ENCODE measurements at regions of chr5 and their contacts with region 1.

Region 1: DNA sequence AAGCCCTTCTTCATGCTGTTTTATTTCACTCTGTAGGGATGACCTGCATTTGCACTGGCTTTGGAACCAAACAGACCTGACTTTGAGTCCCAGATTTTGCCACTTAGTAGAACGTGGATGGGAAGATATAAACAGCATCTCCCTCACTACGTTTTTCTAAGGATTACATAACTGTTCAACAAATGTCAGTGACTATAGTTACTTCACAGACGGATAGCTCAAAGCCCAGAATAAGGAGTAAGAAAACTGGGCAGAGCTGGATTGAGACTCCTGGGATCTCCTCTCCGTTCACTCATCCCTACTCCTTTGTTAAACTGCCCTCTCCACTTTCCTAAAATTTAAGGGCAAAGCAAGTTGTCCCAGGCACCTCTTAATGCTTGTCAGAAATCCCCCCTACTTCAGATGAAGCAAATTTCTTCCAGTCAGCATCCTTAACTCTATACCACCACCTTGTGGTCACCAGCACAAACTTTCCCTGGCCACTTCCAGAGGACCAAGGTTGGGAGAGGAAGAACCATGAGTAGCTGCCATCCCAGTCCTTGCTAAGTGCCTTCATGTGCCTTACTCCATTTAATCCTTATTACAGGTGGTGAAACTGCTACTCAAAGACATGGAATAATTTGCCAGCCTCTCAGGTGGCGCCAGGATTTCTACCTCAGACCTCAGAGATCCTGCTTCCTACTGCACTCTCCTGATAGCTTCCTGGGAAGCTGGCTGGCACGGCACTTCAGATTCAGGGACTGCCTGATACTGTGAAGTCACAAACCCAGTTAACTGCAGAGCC is 38.4 kb downstream of the EGR1 start:
- DNase-seq: peak in 6 of 14 experiments; percentile 20 to 78 (median 51)
- ATAC-seq: peak; percentile 79
- H3K4me3 ChIP-seq: no peak overlapping the region
- H3K4me3 Mint-ChIP-seq: no peak overlapping the region
- H3K27ac ChIP-seq: no peak overlapping the region
- H3K27ac Mint-ChIP-seq: no peak overlapping the region
- H3K4me1 ChIP-seq: no peaks in the 10 kb centered on the region
- H3K4me1 Mint-ChIP-seq: no peaks in the 10 kb centered on the region
- H3K27me3 ChIP-seq: no peaks in the 10 kb centered on the region
- H3K27me3 Mint-ChIP-seq: no peaks in the 10 kb centered on the region
- CTCF ChIP-seq: peak; percentile 74

Region 2: DNA sequence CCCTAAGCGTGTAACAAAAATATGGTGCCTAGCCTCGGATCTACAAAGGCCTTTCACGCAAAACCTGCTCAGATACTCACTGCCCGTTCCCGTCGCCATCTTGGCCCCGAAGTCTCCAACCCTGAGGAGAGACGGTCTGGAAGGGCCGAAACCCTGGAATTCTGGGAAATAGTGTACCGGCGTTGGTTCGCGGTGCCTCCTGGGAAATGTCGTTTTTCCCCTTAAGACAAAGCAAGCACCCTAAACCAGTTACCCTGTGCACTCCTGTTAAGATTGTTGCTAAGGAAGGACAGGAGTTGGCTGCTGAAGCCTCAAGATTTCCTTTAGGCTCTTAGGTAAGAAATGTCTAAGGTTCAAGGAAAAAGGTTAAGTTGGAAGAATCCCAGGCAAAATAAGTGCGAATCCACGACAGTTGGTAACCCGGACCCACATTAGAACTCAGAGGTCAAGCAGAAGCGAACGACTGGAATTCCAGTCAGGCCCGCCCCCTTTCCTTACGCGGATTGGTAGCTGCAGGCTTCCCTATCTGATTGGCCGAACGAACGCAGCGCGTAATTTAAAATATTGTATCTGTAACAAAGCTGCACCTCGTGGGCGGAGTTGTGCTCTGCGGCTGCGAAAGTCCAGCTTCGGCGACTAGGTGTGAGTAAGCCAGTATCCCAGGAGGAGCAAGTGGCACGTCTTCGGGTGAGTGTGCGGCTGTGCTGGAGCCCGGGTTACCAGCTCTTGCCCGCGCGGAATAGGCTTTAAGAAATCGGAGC is 325.0 kb before region 1 on chr5 and contains the starts of genes BRD8 and KIF20A:
- CTCF ChIA-PET with region 1: no interaction called
- POLR2A ChIA-PET with region 1: no interaction called
- intact Hi-C with region 1: loop called in 1 of 2 experiments (anchors 5 kb)
- DNase-seq: peak; percentile 77 to 94 (median 85)
- ATAC-seq: peak; percentile 86
- H3K4me3 ChIP-seq: peak within 1 kb of the TSS; percentile 94
- H3K4me3 Mint-ChIP-seq: no peak within 1 kb of the TSS
- H3K27ac ChIP-seq: peak within 1 kb of the TSS; percentile 55 to 76
- H3K27ac Mint-ChIP-seq: no peak within 1 kb of the TSS
- H3K4me1 ChIP-seq: peaks cover 27% of the 10 kb centered on the region
- H3K4me1 Mint-ChIP-seq: peaks cover 11% of the 10 kb centered on the region
- H3K27me3 ChIP-seq: no peaks in the 10 kb centered on the region
- H3K27me3 Mint-ChIP-seq: no peaks in the 10 kb centered on the region
- CTCF ChIP-seq: no peak
- total RNA-seq, gene BRD8: 6.9 to 9.6 TPM
- total RNA-seq, gene KIF20A: not detected

Region 3: DNA sequence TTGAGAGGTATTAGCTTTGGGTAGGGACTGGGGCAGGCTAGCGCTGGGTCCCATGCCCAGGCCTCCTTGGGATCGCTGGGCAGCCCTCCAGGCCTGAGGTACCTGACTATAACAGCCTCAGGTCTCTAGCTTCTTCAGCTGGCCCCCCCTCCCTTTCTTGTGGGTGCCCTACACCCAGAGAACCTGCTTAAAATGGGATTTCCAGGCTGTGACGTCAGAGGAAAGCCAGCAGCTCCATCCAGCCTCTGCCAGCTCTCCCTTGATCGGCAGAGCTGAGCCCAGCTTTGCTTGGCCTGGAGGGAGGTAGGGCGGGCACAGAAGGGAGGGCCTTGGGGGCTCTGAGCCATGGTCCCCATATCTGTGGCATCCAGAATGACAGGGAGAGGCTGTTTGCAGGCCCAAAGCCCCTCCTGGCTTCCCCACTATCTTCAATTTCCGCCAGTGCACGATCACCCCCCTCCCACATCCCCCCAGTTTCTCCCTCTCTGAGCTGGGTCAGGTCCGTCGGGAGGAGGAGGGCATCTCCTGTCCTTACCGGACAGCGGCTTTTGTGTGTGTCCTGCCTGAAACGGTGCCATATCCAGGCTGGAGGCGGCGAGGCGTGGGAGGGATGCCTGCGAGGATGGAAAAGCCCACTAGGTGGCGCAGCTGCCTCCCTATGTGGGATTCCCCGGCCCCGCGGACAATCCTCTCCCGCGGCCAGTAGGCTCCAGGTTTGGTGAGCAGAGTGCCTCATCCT is 54.0 kb before region 1 on chr5:
- CTCF ChIA-PET with region 1: interaction called, 46 read pairs
- POLR2A ChIA-PET with region 1: interaction called, 3 read pairs
- intact Hi-C with region 1: loop called (anchors 1 kb)
- DNase-seq: peak; percentile 56 to 87 (median 67)
- ATAC-seq: peak; percentile 87
- H3K4me3 ChIP-seq: no peak overlapping the region
- H3K4me3 Mint-ChIP-seq: no peak overlapping the region
- H3K27ac ChIP-seq: no peak overlapping the region
- H3K27ac Mint-ChIP-seq: peak overlapping the region; percentile 54
- H3K4me1 ChIP-seq: peaks cover 10% of the 10 kb centered on the region
- H3K4me1 Mint-ChIP-seq: peaks cover 6% of the 10 kb centered on the region
- H3K27me3 ChIP-seq: no peaks in the 10 kb centered on the region
- H3K27me3 Mint-ChIP-seq: no peaks in the 10 kb centered on the region
- CTCF ChIP-seq: peak; percentile 94

Region 4: DNA sequence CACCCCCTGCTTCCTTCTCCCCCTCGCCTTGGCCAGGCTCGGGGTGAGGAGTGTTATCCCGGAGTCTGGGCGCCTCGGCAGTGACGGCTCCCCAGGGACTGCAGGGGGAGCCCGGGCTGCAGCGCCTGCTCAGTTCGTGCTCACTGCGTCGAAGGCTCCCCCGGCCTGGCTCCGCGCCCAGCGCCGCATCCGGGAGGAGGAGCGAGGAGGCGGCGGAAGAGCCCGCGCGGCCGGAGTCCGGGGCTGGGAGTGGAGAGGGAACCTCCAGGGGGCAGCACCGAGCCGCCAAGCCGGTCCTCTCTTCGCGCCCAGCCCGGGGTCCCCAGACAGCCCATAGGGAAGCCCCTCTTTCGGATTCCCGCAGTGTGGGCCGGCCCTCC is 39.7 kb before region 1 on chr5:
- CTCF ChIA-PET with region 1: interaction called, 38 read pairs
- POLR2A ChIA-PET with region 1: interaction called, 17 read pairs
- intact Hi-C with region 1: loop called (anchors 1 to 2 kb)
- DNase-seq: peak; percentile 85 to 98 (median 93)
- ATAC-seq: peak; percentile 51
- H3K4me3 ChIP-seq: peak overlapping the region; percentile 60
- H3K4me3 Mint-ChIP-seq: peak overlapping the region; percentile 96
- H3K27ac ChIP-seq: peak overlapping the region; percentile 89 to 94
- H3K27ac Mint-ChIP-seq: peak overlapping the region; percentile 93
- H3K4me1 ChIP-seq: peaks cover 60% of the 10 kb centered on the region
- H3K4me1 Mint-ChIP-seq: peaks cover 50% of the 10 kb centered on the region
- H3K27me3 ChIP-seq: no peaks in the 10 kb centered on the region
- H3K27me3 Mint-ChIP-seq: no peaks in the 10 kb centered on the region
- CTCF ChIP-seq: peak; percentile 85

Region 5: GRCh38 chr5:138482638-138483037 is 21.0 kb before region 1 on chr5:
- CTCF ChIA-PET with region 1: no interaction called
- POLR2A ChIA-PET with region 1: no interaction called
- intact Hi-C with region 1: no loop called
- DNase-seq: no peak
- ATAC-seq: no peak
- H3K4me3 ChIP-seq: no peak overlapping the region
- H3K4me3 Mint-ChIP-seq: no peak overlapping the region
- H3K27ac ChIP-seq: no peak overlapping the region
- H3K27ac Mint-ChIP-seq: no peak overlapping the region
- H3K4me1 ChIP-seq: no peaks in the 10 kb centered on the region
- H3K4me1 Mint-ChIP-seq: no peaks in the 10 kb centered on the region
- H3K27me3 ChIP-seq: no peaks in the 10 kb centered on the region
- H3K27me3 Mint-ChIP-seq: no peaks in the 10 kb centered on the region
- CTCF ChIP-seq: no peak

Region 6: DNA sequence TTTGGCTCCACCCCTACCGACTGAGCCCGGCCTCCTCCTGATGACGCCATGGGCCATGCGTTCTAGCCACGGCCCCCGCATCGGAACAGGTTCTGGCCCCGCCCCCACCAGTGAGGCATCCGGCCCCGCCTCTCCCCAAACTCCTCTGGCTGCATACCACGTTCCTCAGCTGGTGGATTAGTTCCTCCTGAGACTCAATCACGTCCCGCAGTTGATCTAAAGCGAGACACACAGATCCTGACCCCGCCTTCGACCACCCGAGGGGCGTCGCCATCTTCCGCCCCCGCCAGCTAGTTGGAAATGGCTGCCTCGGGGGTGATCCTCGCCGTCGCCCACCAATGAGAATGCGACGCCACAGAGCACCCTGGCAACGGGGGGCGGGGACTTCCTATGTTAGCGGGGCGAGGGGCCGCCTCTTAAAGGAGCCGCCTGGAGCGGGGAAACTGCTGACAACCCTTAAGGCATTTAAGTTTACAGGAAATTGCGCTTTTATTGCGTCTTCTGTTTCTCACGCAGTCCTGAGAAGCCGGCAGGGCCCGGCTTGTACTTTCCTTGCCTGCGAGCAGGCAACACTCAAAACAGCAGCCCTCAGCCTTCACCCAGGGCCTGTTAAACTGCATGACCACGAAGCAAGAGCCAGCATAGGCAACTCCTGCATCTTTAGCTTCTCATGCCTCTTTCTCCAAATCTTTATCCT is 900.3 kb after region 1 on chr5 and contains the start of gene SPATA24:
- CTCF ChIA-PET with region 1: no interaction called
- POLR2A ChIA-PET with region 1: no interaction called
- intact Hi-C with region 1: no loop called
- DNase-seq: peak; percentile 95 to 99 (median 98)
- ATAC-seq: peak; percentile 85
- H3K4me3 ChIP-seq: peak within 1 kb of the TSS; percentile 71
- H3K4me3 Mint-ChIP-seq: peak within 1 kb of the TSS; percentile 92
- H3K27ac ChIP-seq: peak within 1 kb of the TSS; percentile 74 to 97
- H3K27ac Mint-ChIP-seq: peak within 1 kb of the TSS; percentile 94
- H3K4me1 ChIP-seq: peaks cover 21% of the 10 kb centered on the region
- H3K4me1 Mint-ChIP-seq: peaks cover 35% of the 10 kb centered on the region
- H3K27me3 ChIP-seq: no peaks in the 10 kb centered on the region
- H3K27me3 Mint-ChIP-seq: no peaks in the 10 kb centered on the region
- CTCF ChIP-seq: no peak
- total RNA-seq, gene SPATA24: 3.0 to 3.9 TPM

Measured in CD4-positive, alpha-beta T cell (primary cell).